Spleen (tissue), 13 donors: ENCODE measurements at regions of chr4 and their contacts with region 1.

Region 1: GRCh38 chr4:119300101-119300978 is 21.6 kb downstream of the FABP2 start:
- DNase-seq: peak; percentile 99
- H3K4me3 ChIP-seq: peak overlapping the region; percentile 62 to 88 (median 68)
- H3K27ac ChIP-seq: peak overlapping the region; percentile 93 to 98 (median 95)
- H3K4me1 ChIP-seq: peaks cover 19 to 51% (median 28%) of the 10 kb centered on the region in 6 donors
- H3K27me3 ChIP-seq: no peaks in the 10 kb centered on the region
- CTCF ChIP-seq: peak in 2 of 11 experiments; percentile 17 to 31
- POLR2A ChIP-seq: peak; percentile 36 to 85 (median 69)

Region 2: GRCh38 chr4:119212234-119212963 is 87.9 kb before region 1 on chr4 and contains the start of gene USP53:
- intact Hi-C with region 1: loop called (anchors 5 kb)
- DNase-seq: peak; percentile 99
- H3K4me3 ChIP-seq: peak within 1 kb of the TSS; percentile 61 to 82 (median 70)
- H3K27ac ChIP-seq: peak within 1 kb of the TSS; percentile 79 to 94 (median 90)
- H3K4me1 ChIP-seq: peaks cover 0 to 36% (median 15%) of the 10 kb centered on the region in 6 donors
- H3K27me3 ChIP-seq: no peaks in the 10 kb centered on the region
- CTCF ChIP-seq: peak in 3 of 11 experiments; percentile 2 to 32 (median 5)
- POLR2A ChIP-seq: peak; percentile 28 to 89 (median 82)
- total RNA-seq, gene USP53: 8.1 to 42.6 (median 22.7) TPM

Region 3: GRCh38 chr4:119284876-119285780 is 15.2 kb before region 1 on chr4:
- intact Hi-C with region 1: no loop called
- DNase-seq: no peak
- H3K4me3 ChIP-seq: no peak overlapping the region
- H3K27ac ChIP-seq: no peak overlapping the region
- H3K4me1 ChIP-seq: peaks cover 0 to 39% (median 24%) of the 10 kb centered on the region in 6 donors
- H3K27me3 ChIP-seq: no peaks in the 10 kb centered on the region
- CTCF ChIP-seq: peak in 3 of 11 experiments; percentile 18 to 36 (median 30)
- POLR2A ChIP-seq: no peak

Region 4: GRCh38 chr4:119315036-119315435 is 14.7 kb after region 1 on chr4:
- intact Hi-C with region 1: no loop called
- DNase-seq: no peak
- H3K4me3 ChIP-seq: no peak overlapping the region
- H3K27ac ChIP-seq: peak overlapping the region in 1 of 8 donors; percentile 51
- H3K4me1 ChIP-seq: peaks cover 0 to 23% (median 5%) of the 10 kb centered on the region in 6 donors
- H3K27me3 ChIP-seq: peaks cover 0 to 12% (median 0%) of the 10 kb centered on the region in 7 donors
- CTCF ChIP-seq: no peak
- POLR2A ChIP-seq: no peak